ENCODE measurements at regions of chr17 and their contacts with region 1.

Region 1: DNA sequence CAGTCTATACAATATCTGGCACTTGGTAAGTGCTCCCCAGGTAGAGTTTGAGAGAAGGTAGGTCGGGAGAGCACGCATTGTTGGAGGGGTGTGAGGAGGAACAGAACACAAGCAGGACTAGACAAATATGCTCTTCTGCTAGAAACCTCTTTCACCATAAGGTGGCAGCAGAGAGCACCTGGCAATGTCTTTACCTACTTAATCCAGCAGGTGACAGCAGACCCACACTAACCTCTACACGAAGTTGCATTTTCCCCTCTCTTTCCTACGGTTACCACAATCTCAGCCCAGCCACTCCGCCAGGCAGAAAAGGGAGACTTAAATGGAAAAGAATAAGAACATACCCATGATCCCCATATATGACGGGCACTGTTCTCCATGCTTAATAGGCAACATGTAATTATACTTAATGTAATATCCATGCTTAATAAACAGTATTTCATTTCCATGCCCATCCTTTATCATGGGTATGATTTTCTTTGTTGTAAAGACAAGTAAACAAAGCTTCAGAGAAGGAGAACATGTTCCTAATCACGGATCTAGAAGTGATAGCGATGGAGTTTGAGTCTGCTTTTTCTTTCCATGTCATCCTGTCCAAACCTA is 55.1 kb upstream of the CCL2 start:
- DNase-seq: peak; percentile 62 to 85
- H3K4me3 ChIP-seq: no peak overlapping the region
- H3K27ac ChIP-seq: no peak overlapping the region
- H3K4me1 ChIP-seq: peaks cover 0 to 2% (median 0%) of the 10 kb centered on the region in 4 experiments; a peak in 3 of 7 replicates
- H3K27me3 ChIP-seq: no peaks in the 10 kb centered on the region; a peak in 1 of 7 replicates
- CTCF ChIP-seq: peak; percentile 51 to 100 (median 100)
- EP300 ChIP-seq: no peak
- POLR2A ChIP-seq: no peak
- RAD21 ChIP-seq: peak; percentile 99 to 100

Region 2: GRCh38 chr17:34171245-34171818 is 28.7 kb before region 1 on chr17:
- CTCF ChIA-PET with region 1: interaction called, 14 read pairs
- POLR2A ChIA-PET with region 1: no interaction called
- DNase-seq: peak in 1 of 2 experiments; percentile 82
- H3K4me3 ChIP-seq: no peak overlapping the region
- H3K27ac ChIP-seq: no peak overlapping the region
- H3K4me1 ChIP-seq: no peaks in the 10 kb centered on the region
- H3K27me3 ChIP-seq: no peaks in the 10 kb centered on the region
- CTCF ChIP-seq: peak; percentile 69 to 90 (median 80)
- EP300 ChIP-seq: no peak
- POLR2A ChIP-seq: no peak
- RAD21 ChIP-seq: peak; percentile 49 to 69

Region 3: GRCh38 chr17:34235389-34236028 is 35.5 kb after region 1 on chr17:
- CTCF ChIA-PET with region 1: interaction called, 22 read pairs
- POLR2A ChIA-PET with region 1: no interaction called
- DNase-seq: no peak
- H3K4me3 ChIP-seq: no peak overlapping the region
- H3K27ac ChIP-seq: no peak overlapping the region
- H3K4me1 ChIP-seq: peaks cover 0 to 2% (median 0%) of the 10 kb centered on the region in 4 experiments; a peak in 1 of 7 replicates
- H3K27me3 ChIP-seq: no peaks in the 10 kb centered on the region
- CTCF ChIP-seq: no peak
- EP300 ChIP-seq: no peak
- POLR2A ChIP-seq: no peak
- RAD21 ChIP-seq: no peak

Region 4: DNA sequence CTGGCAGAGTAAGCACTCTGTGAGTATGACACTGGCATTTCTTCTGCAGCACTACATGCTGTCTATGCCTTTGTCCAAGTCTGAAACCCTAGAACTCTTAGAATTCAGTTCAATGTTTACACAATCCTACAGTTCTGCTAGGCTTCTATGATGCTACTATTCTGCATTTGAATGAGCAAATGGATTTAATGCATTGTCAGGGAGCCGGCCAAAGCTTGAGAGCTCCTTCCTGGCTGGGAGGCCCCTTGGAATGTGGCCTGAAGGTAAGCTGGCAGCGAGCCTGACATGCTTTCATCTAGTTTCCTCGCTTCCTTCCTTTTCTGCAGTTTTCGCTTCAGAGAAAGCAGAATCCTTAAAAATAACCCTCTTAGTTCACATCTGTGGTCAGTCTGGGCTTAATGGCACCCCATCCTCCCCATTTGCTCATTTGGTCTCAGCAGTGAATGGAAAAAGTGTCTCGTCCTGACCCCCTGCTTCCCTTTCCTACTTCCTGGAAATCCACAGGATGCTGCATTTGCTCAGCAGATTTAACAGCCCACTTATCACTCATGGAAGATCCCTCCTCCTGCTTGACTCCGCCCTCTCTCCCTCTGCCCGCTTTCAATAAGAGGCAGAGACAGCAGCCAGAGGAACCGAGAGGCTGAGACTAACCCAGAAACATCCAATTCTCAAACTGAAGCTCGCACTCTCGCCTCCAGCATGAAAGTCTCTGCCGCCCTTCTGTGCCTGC is 54.8 kb after region 1 on chr17 and contains the start of gene CCL2:
- CTCF ChIA-PET with region 1: interaction called, 13 read pairs
- POLR2A ChIA-PET with region 1: no interaction called
- DNase-seq: peak; percentile 46 to 56
- H3K4me3 ChIP-seq: peak within 1 kb of the TSS; percentile 25 to 53 (median 44); a peak in 7 of 8 replicates
- H3K27ac ChIP-seq: peak within 1 kb of the TSS; percentile 32; the same call in 1 of the 2 replicates
- H3K4me1 ChIP-seq: peaks cover 4 to 11% (median 7%) of the 10 kb centered on the region in 4 experiments; a peak in 6 of 7 replicates
- H3K27me3 ChIP-seq: no peaks in the 10 kb centered on the region
- CTCF ChIP-seq: no peak
- EP300 ChIP-seq: no peak
- POLR2A ChIP-seq: no peak
- RAD21 ChIP-seq: no peak
- total RNA-seq, gene CCL2: 3.1 and 3.7 TPM in 2 replicates

Region 5: DNA sequence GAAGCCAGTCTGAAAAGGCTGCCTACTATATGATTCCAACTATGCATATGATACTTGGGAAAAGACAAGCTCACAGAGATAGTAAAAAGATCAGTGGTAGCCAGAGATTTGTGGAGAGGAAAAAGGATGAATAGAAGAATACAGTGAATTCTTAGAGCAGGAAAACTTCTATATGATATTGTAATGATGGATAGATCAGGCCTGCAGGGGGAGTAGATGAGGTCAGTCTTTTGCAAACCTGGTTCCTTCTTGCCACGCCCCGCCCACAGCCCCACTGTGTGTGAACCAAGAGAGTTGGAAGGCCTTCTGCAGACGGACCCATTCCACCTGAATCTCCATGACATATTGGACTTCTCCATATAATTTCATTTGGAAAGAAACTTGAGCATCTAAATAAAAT is 118.4 kb after region 1 on chr17:
- CTCF ChIA-PET with region 1: interaction called, 44 read pairs
- POLR2A ChIA-PET with region 1: no interaction called
- DNase-seq: peak in 1 of 2 experiments; percentile 56
- H3K4me3 ChIP-seq: no peak overlapping the region
- H3K27ac ChIP-seq: no peak overlapping the region
- H3K4me1 ChIP-seq: no peaks in the 10 kb centered on the region
- H3K27me3 ChIP-seq: no peaks in the 10 kb centered on the region
- CTCF ChIP-seq: peak; percentile 7 to 43 (median 39); a peak in 3 of 4 replicates
- EP300 ChIP-seq: no peak
- POLR2A ChIP-seq: no peak
- RAD21 ChIP-seq: peak; percentile 12 to 30; a peak in 3 of 4 replicates

Region 6: DNA sequence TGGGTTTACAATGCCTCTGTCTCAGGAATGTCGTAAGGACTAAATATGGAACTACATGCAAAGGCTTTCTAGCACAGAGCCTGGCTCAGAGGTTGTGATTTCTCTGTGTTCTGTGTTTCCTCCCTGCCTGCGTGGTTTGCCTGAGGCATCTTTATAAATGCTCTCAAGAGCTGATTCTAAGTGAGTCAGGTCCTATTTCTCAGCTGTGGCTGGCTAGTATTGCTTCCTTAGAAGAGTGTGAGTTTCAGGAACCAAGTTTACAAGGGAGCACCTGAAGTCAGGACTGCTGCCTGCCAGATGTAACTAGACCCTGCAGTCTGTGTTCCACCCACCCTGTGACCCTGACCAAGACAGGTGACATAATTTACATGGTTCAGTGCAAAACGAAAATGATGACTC is 171.0 kb after region 1 on chr17:
- CTCF ChIA-PET with region 1: interaction called, 442 read pairs
- POLR2A ChIA-PET with region 1: no interaction called
- DNase-seq: no peak
- H3K4me3 ChIP-seq: no peak overlapping the region
- H3K27ac ChIP-seq: no peak overlapping the region
- H3K4me1 ChIP-seq: no peaks in the 10 kb centered on the region
- H3K27me3 ChIP-seq: no peaks in the 10 kb centered on the region
- CTCF ChIP-seq: no peak
- EP300 ChIP-seq: no peak
- POLR2A ChIP-seq: no peak
- RAD21 ChIP-seq: no peak

Measured in H1 (cell line).